ENCODE measurements at regions of chr17 and their contacts with region 1.

Region 1: DNA sequence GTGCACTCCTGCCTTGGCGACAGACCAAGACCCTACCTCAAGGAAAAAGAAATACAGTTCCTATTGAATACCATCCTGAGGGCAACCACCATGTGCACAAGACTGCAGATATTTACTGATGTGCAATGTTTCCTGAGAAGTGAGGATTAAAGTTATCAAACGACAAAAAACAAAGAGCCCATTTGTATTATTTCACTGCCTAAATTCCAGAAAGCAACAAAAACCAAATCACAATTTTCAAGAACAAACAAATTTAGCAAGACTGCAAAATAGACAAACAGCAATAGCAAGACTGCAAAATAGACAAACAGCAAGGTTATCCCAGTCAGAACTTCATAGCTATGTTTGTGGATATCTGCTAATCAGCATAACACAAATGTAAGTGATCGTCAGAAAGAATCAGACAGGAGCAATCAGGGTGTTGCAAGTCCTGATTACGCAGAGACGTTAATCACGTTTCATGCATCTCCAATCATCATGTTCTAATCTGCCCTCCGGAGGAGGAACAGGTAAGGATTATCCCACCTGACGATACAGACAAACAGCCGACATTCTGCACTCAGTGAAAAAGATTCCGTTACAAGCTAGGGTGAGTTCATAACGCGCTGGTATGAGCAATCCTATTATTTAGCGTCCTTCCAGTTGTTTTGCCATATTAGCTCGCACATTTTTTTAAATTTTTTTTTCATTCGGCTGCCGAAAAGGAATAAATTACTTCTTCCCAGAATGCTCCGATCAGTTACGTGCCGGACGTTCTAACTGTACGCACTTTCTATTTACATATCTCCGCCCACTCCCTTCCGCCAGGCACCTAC is 2.9 kb downstream of the TMEM107 start:
- DNase-seq: no peak
- ATAC-seq: peak; percentile 84
- H3K4me3 Mint-ChIP-seq: peak overlapping the region; percentile 84
- H3K27ac Mint-ChIP-seq: peak overlapping the region; percentile 97
- H3K4me1 Mint-ChIP-seq: peaks cover 28% of the 10 kb centered on the region
- H3K27me3 Mint-ChIP-seq: no peaks in the 10 kb centered on the region

Region 2: GRCh38 chr17:8029135-8029534 is 144.1 kb before region 1 on chr17:
- POLR2A ChIA-PET with region 1: no interaction called
- DNase-seq: no peak
- ATAC-seq: no peak
- H3K4me3 Mint-ChIP-seq: no peak overlapping the region
- H3K27ac Mint-ChIP-seq: no peak overlapping the region
- H3K4me1 Mint-ChIP-seq: peaks cover 2% of the 10 kb centered on the region
- H3K27me3 Mint-ChIP-seq: peaks cover 27% of the 10 kb centered on the region

Region 3: GRCh38 chr17:8118769-8119580 is 54.3 kb before region 1 on chr17:
- POLR2A ChIA-PET with region 1: interaction called, 34 read pairs
- DNase-seq: peak; percentile 90
- ATAC-seq: peak; percentile 68
- H3K4me3 Mint-ChIP-seq: peak overlapping the region; percentile 91
- H3K27ac Mint-ChIP-seq: peak overlapping the region; percentile 92
- H3K4me1 Mint-ChIP-seq: peaks cover 46% of the 10 kb centered on the region
- H3K27me3 Mint-ChIP-seq: peaks cover 61% of the 10 kb centered on the region

Region 4: GRCh38 chr17:8156246-8156992 is 16.8 kb before region 1 on chr17:
- POLR2A ChIA-PET with region 1: interaction called, 384 read pairs
- DNase-seq: peak; percentile 99
- ATAC-seq: peak; percentile 77
- H3K4me3 Mint-ChIP-seq: no peak overlapping the region
- H3K27ac Mint-ChIP-seq: no peak overlapping the region
- H3K4me1 Mint-ChIP-seq: peaks cover 54% of the 10 kb centered on the region
- H3K27me3 Mint-ChIP-seq: no peaks in the 10 kb centered on the region

Region 5: GRCh38 chr17:8189711-8190477 is 16.6 kb after region 1 on chr17 and contains the start of gene BORCS6:
- POLR2A ChIA-PET with region 1: interaction called, 105 read pairs
- DNase-seq: peak; percentile 90
- ATAC-seq: peak; percentile 66
- H3K4me3 Mint-ChIP-seq: no peak within 1 kb of the TSS
- H3K27ac Mint-ChIP-seq: peak within 1 kb of the TSS; percentile 95
- H3K4me1 Mint-ChIP-seq: peaks cover 10% of the 10 kb centered on the region
- H3K27me3 Mint-ChIP-seq: no peaks in the 10 kb centered on the region
- total RNA-seq, gene BORCS6: 15.7 to 16.5 TPM

Region 6: DNA sequence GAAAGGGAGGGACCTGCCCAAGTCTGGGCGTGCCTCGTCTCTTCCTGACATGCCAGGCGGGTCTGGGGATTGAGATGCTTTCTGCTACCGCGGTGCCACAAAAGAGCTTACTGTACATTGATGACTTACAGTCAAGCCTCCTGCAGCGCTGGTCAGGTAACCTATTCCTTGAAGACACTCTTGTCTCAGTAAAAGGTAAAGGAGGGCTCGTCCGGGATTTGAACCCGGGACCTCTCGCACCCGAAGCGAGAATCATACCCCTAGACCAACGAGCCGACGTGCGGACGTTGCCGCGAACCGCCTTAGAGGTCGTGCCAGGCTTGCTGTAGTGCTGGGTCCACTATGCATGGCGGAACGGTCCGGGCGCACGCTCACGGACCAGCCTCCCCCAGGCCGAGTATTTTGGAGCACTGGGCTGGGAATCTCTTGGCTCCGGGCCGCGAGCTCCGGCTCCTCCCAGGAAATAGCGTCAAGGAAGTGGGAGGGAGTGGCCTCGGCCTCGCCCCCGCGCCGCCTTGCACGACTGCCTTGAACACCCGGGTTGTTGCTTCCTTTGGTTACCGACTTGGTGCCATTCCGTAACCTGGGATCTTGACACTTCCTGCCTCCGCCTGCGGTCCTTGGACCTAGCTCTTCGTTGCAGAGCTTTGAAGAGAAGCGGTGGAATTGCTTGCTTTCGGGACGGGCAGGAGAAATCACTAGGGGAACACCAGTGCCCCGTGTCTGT is 49.5 kb after region 1 on chr17:
- POLR2A ChIA-PET with region 1: interaction called, 40 read pairs
- DNase-seq: peak; percentile 90
- ATAC-seq: peak; percentile 40
- H3K4me3 Mint-ChIP-seq: peak overlapping the region; percentile 93
- H3K27ac Mint-ChIP-seq: peak overlapping the region; percentile 95
- H3K4me1 Mint-ChIP-seq: peaks cover 52% of the 10 kb centered on the region
- H3K27me3 Mint-ChIP-seq: peaks cover 2% of the 10 kb centered on the region

Region 7: DNA sequence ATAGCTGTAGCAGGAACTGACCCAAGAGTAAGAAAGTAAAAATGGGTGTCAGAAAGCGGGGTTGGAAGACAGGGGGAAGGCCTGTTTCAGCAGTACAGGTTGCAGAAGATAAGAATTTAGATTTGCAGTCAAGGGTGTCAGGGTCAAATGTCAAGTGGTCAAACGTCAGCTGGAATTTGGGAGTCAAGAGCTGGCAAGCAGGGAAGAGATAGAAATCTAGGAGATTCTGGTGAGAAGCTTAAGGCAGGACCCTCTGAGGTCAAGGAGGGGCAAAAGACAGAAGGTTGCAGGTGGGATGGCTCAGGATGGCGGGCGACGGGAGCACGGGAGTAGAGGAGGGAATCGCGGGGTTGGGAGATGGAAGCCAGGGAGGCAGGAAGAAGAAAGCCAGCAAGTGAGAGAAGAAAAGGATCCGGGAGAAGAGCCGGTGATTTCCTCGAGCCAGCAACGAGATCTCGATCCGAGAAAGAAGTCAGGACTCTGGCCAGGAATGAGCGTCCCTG is 121.6 kb after region 1 on chr17:
- POLR2A ChIA-PET with region 1: interaction called, 18 read pairs
- DNase-seq: no peak
- ATAC-seq: no peak
- H3K4me3 Mint-ChIP-seq: peak overlapping the region; percentile 96
- H3K27ac Mint-ChIP-seq: peak overlapping the region; percentile 92
- H3K4me1 Mint-ChIP-seq: peaks cover 32% of the 10 kb centered on the region
- H3K27me3 Mint-ChIP-seq: no peaks in the 10 kb centered on the region

Region 8: GRCh38 chr17:8311131-8311790 is 138.0 kb after region 1 on chr17:
- POLR2A ChIA-PET with region 1: no interaction called
- DNase-seq: no peak
- ATAC-seq: no peak
- H3K4me3 Mint-ChIP-seq: no peak overlapping the region
- H3K27ac Mint-ChIP-seq: no peak overlapping the region
- H3K4me1 Mint-ChIP-seq: no peaks in the 10 kb centered on the region
- H3K27me3 Mint-ChIP-seq: peaks cover 6% of the 10 kb centered on the region

Measured in activated naive CD8-positive, alpha-beta T cell treated with anti-CD3 and anti-CD28 coated beads, Interleukin-2, amount 10 ng/mL, durations not matched to agents 7 days and 5 days (primary cell).